ENCODE measurements at regions of chr5 and their contacts with region 1.

Region 1: DNA sequence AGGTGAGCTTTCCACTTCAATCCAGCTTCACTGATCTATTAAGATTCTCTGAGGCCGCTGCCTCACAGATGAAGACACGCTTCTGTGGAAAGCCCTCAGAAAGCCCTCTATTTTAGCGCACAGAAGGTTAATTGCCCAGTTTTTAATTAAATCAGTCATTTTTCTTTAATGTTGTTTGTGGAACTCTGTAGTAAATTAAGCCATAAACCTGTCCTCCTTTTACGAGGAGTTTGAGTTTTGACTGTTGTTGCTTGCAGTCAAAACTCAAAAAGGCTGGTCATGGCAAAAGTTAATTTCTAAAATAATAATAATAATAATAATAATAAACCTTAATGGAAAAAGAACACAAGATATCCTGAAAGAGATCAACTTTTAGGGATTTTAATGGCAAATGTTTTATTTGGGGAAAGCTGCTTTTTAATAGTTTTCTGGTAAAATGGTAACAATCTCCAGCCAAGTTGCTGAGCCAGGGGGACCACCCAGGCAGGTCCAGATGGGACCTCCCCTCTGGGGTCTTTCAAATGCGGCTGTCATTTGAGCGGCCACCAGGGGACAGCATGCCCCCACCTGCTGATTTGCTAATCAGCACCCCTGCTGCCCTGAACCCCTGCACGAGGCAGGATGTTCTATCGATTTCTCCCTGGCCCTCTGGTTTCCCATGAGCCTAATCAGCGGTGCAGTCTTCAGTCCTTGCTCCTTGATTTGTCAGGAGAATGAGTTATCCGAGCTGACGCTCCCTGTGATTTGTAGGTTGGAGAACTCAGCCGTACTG is 247.2 kb downstream of the FSTL4 start:
- DNase-seq: no peak
- ATAC-seq: peak; percentile 50
- H3K4me3 Mint-ChIP-seq: no peak overlapping the region
- H3K27ac Mint-ChIP-seq: no peak overlapping the region
- H3K4me1 Mint-ChIP-seq: no peaks in the 10 kb centered on the region
- H3K27me3 Mint-ChIP-seq: peaks cover 7% of the 10 kb centered on the region
- CTCF ChIP-seq: no peak

Region 2: DNA sequence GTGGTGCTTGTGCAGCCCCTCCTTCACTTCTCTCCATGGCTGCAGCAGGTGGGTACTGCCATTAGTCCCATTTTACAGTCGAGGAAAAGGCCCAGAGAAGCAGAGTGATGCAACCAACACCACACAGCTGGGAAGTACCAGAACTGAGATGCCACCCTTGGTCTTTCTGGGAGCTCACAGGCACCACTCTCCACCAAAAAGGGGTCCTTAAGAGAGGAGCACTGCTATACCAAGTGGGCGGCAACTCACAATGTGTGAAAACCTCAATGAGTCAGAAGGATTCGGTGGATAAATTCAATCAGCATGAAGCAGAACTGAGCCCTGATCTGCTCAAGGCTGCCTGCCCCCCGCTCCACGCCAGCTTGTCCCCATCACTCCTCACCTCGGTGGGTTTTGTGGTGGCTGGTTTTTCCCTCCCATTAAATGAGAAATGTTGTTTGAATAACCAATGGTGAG is 33.6 kb after region 1 on chr5:
- CTCF ChIA-PET with region 1: interaction called, 3 read pairs
- POLR2A ChIA-PET with region 1: no interaction called
- intact Hi-C with region 1: loop called (anchors 1 kb)
- DNase-seq: no peak
- ATAC-seq: peak; percentile 88
- H3K4me3 Mint-ChIP-seq: peak overlapping the region; percentile 59
- H3K27ac Mint-ChIP-seq: peak overlapping the region; percentile 94
- H3K4me1 Mint-ChIP-seq: peaks cover 48% of the 10 kb centered on the region
- H3K27me3 Mint-ChIP-seq: no peaks in the 10 kb centered on the region
- CTCF ChIP-seq: no peak

Region 3: DNA sequence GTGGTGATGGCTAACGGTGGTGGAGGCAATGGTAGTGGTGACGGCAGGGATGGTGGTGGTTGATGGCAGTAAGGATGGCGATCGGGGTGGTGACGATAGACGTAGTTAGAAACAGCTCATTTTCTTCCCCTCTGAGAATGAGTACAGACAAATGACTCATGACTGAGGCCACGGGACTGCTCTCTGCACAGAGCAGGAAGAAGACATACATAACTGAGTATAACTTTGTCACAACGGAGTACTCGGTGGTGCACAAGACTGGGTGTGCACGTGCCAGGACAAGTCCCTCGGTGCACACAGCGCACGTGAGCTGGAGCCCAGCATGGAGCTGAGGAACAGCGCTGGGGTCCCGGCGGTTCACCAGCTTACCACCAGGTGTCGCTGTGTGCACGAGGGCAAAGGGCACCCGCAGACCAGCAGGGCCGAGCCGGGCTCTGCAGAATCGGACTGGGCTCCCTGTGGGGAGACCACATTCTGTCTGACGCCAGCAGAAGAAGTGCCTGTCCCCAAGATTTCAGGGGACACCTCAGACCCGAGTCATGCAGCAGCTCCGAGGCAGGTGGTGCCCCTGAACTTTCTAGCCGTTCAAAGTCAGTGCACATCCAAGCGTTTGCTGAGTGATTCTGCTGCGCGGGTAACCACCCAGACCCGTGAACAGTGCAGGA is 58.6 kb after region 1 on chr5:
- CTCF ChIA-PET with region 1: interaction called, 23 read pairs
- POLR2A ChIA-PET with region 1: no interaction called
- intact Hi-C with region 1: loop called (anchors 2 kb)
- DNase-seq: peak; percentile 75
- ATAC-seq: peak; percentile 94
- H3K4me3 Mint-ChIP-seq: no peak overlapping the region
- H3K27ac Mint-ChIP-seq: peak overlapping the region; percentile 19
- H3K4me1 Mint-ChIP-seq: peaks cover 10% of the 10 kb centered on the region
- H3K27me3 Mint-ChIP-seq: peaks cover 3% of the 10 kb centered on the region
- CTCF ChIP-seq: peak; percentile 81

Region 4: GRCh38 chr5:133460172-133460758 is 95.1 kb after region 1 on chr5:
- CTCF ChIA-PET with region 1: interaction called, 6 read pairs
- POLR2A ChIA-PET with region 1: no interaction called
- intact Hi-C with region 1: loop called (anchors 1 kb)
- DNase-seq: peak; percentile 31
- ATAC-seq: no peak
- H3K4me3 Mint-ChIP-seq: no peak overlapping the region
- H3K27ac Mint-ChIP-seq: no peak overlapping the region
- H3K4me1 Mint-ChIP-seq: no peaks in the 10 kb centered on the region
- H3K27me3 Mint-ChIP-seq: no peaks in the 10 kb centered on the region
- CTCF ChIP-seq: no peak

Region 5: DNA sequence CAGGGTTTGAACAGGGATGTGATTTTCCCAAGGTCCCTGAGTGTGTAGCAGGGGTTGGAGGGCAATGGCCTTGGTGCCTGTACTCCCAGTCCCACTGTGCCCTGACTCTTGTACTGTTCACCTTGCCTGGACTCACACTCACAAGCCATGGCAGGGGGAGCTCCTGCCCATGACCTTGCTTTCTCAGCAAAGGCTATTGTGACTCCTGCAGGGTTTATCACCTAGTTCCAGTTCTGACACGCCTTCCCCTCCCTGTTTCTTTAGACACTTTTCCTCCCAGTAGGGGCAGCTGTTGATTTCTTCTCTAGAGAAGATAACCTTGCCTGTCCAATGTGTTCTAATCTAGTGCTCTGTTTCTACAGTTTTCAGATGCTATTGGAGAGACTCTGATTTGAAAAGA is 107.7 kb after region 1 on chr5:
- CTCF ChIA-PET with region 1: no interaction called
- POLR2A ChIA-PET with region 1: no interaction called
- intact Hi-C with region 1: no loop called
- DNase-seq: no peak
- ATAC-seq: no peak
- H3K4me3 Mint-ChIP-seq: no peak overlapping the region
- H3K27ac Mint-ChIP-seq: no peak overlapping the region
- H3K4me1 Mint-ChIP-seq: no peaks in the 10 kb centered on the region
- H3K27me3 Mint-ChIP-seq: peaks cover 27% of the 10 kb centered on the region
- CTCF ChIP-seq: no peak

Region 6: DNA sequence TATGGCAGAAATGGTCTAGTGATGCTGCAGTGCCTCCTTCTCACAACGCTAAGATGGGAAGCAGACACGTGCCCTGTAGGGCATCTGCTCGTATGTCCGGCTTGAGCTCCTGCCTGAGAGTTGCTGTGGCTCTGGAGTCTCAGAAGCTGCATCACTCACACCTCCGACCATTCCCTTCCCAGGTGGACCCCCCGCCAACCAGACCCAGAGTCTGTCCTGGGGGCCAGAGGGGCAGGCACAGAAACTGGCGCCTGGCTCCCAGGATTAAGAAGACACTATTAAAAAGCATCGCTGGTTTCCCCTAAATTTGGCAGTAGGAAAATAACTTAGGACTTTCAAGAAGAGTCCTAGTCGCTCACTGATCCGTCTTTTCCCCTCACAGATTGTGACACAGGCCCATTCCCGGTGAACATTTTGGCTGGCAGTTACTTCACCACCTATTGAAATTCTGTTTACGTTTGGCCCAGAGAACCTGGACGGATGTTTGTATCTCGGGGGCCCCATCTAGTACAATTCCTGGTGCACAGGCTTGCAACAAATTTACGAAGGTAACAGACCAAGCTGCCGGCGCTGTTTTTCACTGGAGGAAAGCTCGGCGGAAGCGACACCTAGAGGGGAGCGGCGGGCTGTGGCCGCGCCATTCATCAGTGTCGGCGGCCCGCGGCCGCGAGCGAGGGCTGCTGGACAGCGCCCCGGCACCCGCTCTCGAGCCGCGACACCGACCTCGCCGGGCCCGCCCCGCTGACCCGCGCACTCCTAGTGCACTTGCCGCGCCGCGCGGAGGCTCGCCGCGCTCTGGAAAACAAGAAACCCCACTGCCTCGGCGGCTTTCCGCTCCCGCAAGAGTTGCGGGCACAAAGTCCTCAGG is 245.6 kb after region 1 on chr5:
- CTCF ChIA-PET with region 1: interaction called, 3 read pairs
- POLR2A ChIA-PET with region 1: no interaction called
- intact Hi-C with region 1: loop called (anchors 1 kb)
- DNase-seq: peak; percentile 39
- ATAC-seq: peak; percentile 73
- H3K4me3 Mint-ChIP-seq: peak overlapping the region; percentile 73
- H3K27ac Mint-ChIP-seq: no peak overlapping the region
- H3K4me1 Mint-ChIP-seq: peaks cover 17% of the 10 kb centered on the region
- H3K27me3 Mint-ChIP-seq: peaks cover 53% of the 10 kb centered on the region
- CTCF ChIP-seq: no peak

Measured in activated B cell treated with CpG ODN at 0.5 μM for 24 hours (primary cell).